Activated CD4-positive, alpha-beta memory T cell treated with anti-CD3 and anti-CD28 coated beads, Interleukin-2, amount 10 ng/mL, durations not matched to agents 7 days and 5 days (primary cell): ENCODE measurements at regions of chr12 and their contacts with region 1.

Region 1: DNA sequence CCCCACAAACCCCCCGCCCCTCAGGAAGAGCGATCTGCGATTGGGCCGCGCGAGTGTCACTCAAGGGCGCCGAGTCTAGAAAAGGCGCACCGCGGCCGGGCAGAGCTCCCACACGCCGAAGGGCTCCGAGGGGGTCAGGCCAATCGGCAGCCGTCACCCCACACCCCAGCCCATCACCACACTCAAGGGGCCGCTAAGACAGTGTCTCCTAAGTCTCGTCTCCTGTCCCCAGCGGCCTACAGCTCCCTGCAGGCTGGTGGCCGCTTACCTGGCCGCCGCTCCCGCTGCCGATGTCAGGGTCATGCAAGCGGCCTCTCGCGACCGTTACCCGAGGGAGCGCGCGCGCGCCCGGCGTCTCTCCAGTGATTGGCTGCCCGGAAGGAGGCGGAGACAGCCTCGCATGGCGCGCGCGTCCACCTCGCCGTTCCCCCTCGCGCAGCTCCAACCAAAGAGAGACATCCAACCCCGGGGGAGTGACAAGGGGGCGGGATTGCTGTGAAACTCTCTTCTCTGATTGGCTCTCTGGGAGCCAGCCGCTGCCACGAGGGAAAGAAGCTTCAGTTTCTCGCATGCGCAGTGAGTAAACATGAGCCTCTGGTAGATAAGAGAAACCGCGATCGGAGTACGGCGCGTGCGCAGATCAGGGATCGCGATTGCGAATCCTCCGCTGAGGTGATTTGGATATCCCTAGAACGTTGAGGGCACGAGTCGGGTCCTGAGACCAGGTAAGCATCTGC is at the starts of genes MPHOSPH9 and MTRFR:
- DNase-seq: peak; percentile 99
- H3K4me3 Mint-ChIP-seq: peak within 1 kb of the TSS; percentile 94
- H3K27ac Mint-ChIP-seq: peak within 1 kb of the TSS; percentile 97
- H3K4me1 Mint-ChIP-seq: peaks cover 76% of the 10 kb centered on the region
- H3K27me3 Mint-ChIP-seq: no peaks in the 10 kb centered on the region
- total RNA-seq, gene MPHOSPH9: 113 to 116 TPM
- total RNA-seq, gene MTRFR: 29.9 to 30.0 TPM

Region 2: GRCh38 chr12:122842505-122843405 is 390.2 kb before region 1 on chr12:
- CTCF ChIA-PET with region 1: no interaction called
- POLR2A ChIA-PET with region 1: no interaction called
- DNase-seq: no peak
- H3K4me3 Mint-ChIP-seq: no peak overlapping the region
- H3K27ac Mint-ChIP-seq: no peak overlapping the region
- H3K4me1 Mint-ChIP-seq: peaks cover 8% of the 10 kb centered on the region
- H3K27me3 Mint-ChIP-seq: no peaks in the 10 kb centered on the region

Region 3: DNA sequence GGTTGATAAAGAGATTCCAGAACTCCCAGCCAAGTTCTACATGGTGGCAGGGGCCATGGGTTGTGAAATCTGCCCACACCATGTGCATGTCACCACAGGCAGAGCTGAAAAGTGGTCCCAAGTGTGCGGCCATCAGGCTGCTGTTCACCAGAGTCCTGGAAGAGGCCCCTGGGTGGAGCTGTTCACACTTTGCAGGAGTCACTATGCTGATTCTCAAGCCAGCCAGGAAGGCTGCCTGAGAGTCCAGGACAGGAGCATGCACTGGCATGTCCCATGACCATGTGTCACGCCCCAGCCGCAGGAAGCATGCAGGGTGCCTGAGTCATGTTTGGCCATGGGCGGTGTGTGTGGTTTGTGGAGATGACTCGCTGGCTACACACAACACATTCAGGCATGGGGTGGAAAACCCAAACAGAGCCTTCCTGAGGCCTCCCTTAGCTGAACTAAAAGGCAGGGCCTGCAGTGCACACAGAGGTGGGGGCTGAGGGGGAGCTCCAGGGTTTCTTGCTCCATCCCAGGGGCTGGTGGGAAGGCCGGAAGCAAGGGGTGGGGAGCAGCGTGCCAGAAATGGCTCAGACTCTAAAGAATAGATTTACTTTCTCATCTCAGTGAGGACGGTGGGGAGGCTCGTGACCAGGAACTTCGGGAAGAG is 286.2 kb before region 1 on chr12:
- CTCF ChIA-PET with region 1: no interaction called
- POLR2A ChIA-PET with region 1: interaction called, 11 read pairs
- DNase-seq: peak; percentile 90
- H3K4me3 Mint-ChIP-seq: peak overlapping the region; percentile 34
- H3K27ac Mint-ChIP-seq: peak overlapping the region; percentile 72
- H3K4me1 Mint-ChIP-seq: peaks cover 42% of the 10 kb centered on the region
- H3K27me3 Mint-ChIP-seq: no peaks in the 10 kb centered on the region

Region 4: GRCh38 chr12:123043536-123044001 is 189.4 kb before region 1 on chr12:
- CTCF ChIA-PET with region 1: interaction called, 38 read pairs
- POLR2A ChIA-PET with region 1: interaction called, 15 read pairs
- DNase-seq: peak; percentile 71
- H3K4me3 Mint-ChIP-seq: no peak overlapping the region
- H3K27ac Mint-ChIP-seq: no peak overlapping the region
- H3K4me1 Mint-ChIP-seq: peaks cover 15% of the 10 kb centered on the region
- H3K27me3 Mint-ChIP-seq: no peaks in the 10 kb centered on the region

Region 5: GRCh38 chr12:123167329-123167728 is 65.6 kb before region 1 on chr12:
- CTCF ChIA-PET with region 1: interaction called, 11 read pairs
- POLR2A ChIA-PET with region 1: interaction called, 4 read pairs
- DNase-seq: no peak
- H3K4me3 Mint-ChIP-seq: no peak overlapping the region
- H3K27ac Mint-ChIP-seq: no peak overlapping the region
- H3K4me1 Mint-ChIP-seq: no peaks in the 10 kb centered on the region
- H3K27me3 Mint-ChIP-seq: no peaks in the 10 kb centered on the region

Region 6: GRCh38 chr12:123305136-123305535 is 72.2 kb after region 1 on chr12:
- CTCF ChIA-PET with region 1: no interaction called
- POLR2A ChIA-PET with region 1: no interaction called
- DNase-seq: no peak
- H3K4me3 Mint-ChIP-seq: no peak overlapping the region
- H3K27ac Mint-ChIP-seq: no peak overlapping the region
- H3K4me1 Mint-ChIP-seq: no peaks in the 10 kb centered on the region
- H3K27me3 Mint-ChIP-seq: no peaks in the 10 kb centered on the region

Region 7: GRCh38 chr12:123388177-123388947 is 155.4 kb after region 1 on chr12:
- CTCF ChIA-PET with region 1: interaction called, 7 read pairs
- POLR2A ChIA-PET with region 1: interaction called, 12 read pairs
- DNase-seq: peak; percentile 80
- H3K4me3 Mint-ChIP-seq: peak overlapping the region; percentile 78
- H3K27ac Mint-ChIP-seq: peak overlapping the region; percentile 91
- H3K4me1 Mint-ChIP-seq: peaks cover 54% of the 10 kb centered on the region
- H3K27me3 Mint-ChIP-seq: no peaks in the 10 kb centered on the region